H1 (cell line): ENCODE measurements at regions of chr16 and their contacts with region 1.

Region 1: GRCh38 chr16:11783319-11784037 is 13.6 kb downstream of the ZC3H7A start:
- DNase-seq: no peak
- H3K4me3 ChIP-seq: no peak overlapping the region
- H3K27ac ChIP-seq: no peak overlapping the region
- H3K4me1 ChIP-seq: no peaks in the 10 kb centered on the region
- H3K27me3 ChIP-seq: no peaks in the 10 kb centered on the region
- CTCF ChIP-seq: no peak
- EP300 ChIP-seq: no peak
- POLR2A ChIP-seq: no peak
- RAD21 ChIP-seq: no peak

Region 2: DNA sequence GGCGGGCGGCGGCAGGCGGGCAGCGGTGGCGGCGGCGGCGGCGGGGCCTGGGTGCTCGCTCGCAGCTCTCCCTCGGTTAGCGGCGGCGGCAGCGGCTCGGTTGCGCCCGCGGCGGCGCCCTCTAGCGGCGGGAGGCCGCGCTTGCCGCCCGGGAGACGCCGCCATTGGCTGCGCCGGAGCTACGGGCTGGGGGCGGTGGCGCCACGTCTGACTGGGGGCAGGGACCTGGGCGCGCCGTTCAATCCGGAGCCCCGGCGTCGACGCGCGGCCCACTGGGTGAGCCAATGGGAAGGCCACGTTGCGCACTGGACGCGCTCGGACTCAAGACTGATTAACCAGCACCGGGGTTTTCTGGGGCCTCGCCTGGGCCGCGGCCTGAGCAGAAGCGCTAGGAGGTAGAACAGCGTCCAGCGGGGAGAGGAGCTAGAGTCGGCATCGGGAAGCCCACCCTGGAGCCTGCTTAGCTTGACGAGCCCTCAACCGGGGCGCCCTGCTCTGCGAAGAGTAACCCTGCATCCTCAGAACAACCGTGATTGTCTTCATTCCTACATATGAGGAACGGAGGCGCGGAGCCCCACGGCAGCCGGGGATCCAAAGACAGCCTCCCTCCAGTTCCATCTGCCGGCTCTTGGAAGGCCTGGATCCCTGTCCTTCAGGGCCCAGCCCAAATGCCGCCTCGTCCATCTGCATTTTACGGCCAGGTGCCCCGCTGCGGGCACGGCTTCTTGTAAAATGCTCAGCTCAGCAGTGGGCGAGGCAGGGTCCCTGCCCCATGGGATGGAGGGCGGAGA is 13.9 kb after region 1 on chr16 and contains the start of gene ZC3H7A:
- CTCF ChIA-PET with region 1: interaction called, 14 read pairs
- POLR2A ChIA-PET with region 1: interaction called, 12 read pairs
- DNase-seq: peak; percentile 90 to 91
- H3K4me3 ChIP-seq: peak within 1 kb of the TSS; percentile 78 to 96 (median 88)
- H3K27ac ChIP-seq: peak within 1 kb of the TSS; percentile 81
- H3K4me1 ChIP-seq: peaks cover 0 to 6% (median 3%) of the 10 kb centered on the region in 4 experiments; a peak in 4 of 7 replicates
- H3K27me3 ChIP-seq: no peaks in the 10 kb centered on the region
- CTCF ChIP-seq: peak; percentile 46 to 78 (median 68); a peak in 3 of 4 replicates
- EP300 ChIP-seq: peak in 1 of 2 experiments; percentile 55; a peak in 1 of 3 replicates
- POLR2A ChIP-seq: peak; percentile 86 to 94
- RAD21 ChIP-seq: no peak
- total RNA-seq, gene ZC3H7A: 42.5 and 55.9 TPM in 2 replicates